Ascending aorta (tissue), 2 donors: ENCODE measurements at regions of chr17 and their contacts with region 1.

Region 1: GRCh38 chr17:48024937-48025906 is 12.4 kb downstream of the COPZ2 start:
- DNase-seq: peak; percentile 93 to 99
- H3K4me3 ChIP-seq: peak overlapping the region; percentile 61 to 63
- H3K27ac ChIP-seq: peak overlapping the region; percentile 77 to 86
- H3K4me1 ChIP-seq: peaks cover 17 to 31% of the 10 kb centered on the region in 2 donors
- H3K27me3 ChIP-seq: no peaks in the 10 kb centered on the region
- CTCF ChIP-seq: peak; percentile 91 to 93 (median 92)

Region 2: DNA sequence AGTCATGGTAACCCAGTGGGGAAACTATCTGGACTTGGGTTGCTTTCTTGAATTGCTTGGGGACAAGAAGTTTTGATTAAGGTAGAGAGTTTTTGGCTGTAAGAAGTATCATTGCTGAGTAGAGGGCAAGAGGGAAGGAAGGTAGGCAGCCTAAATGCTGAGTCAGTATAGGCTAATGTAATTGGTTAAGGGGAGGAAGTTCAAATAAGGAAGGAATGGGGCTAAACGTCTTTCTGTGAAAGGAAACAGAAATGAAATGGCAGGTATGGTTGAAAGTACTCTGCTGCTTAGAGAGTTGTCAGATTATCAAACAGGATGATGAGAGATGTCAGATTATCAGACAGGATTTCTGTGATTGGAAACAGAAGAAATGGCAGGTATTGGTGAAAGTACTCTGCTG is 355.1 kb before region 1 on chr17:
- intact Hi-C with region 1: no loop called
- DNase-seq: no peak
- H3K4me3 ChIP-seq: no peak overlapping the region
- H3K27ac ChIP-seq: no peak overlapping the region
- H3K4me1 ChIP-seq: no peaks in the 10 kb centered on the region
- H3K27me3 ChIP-seq: no peaks in the 10 kb centered on the region
- CTCF ChIP-seq: no peak

Region 3: DNA sequence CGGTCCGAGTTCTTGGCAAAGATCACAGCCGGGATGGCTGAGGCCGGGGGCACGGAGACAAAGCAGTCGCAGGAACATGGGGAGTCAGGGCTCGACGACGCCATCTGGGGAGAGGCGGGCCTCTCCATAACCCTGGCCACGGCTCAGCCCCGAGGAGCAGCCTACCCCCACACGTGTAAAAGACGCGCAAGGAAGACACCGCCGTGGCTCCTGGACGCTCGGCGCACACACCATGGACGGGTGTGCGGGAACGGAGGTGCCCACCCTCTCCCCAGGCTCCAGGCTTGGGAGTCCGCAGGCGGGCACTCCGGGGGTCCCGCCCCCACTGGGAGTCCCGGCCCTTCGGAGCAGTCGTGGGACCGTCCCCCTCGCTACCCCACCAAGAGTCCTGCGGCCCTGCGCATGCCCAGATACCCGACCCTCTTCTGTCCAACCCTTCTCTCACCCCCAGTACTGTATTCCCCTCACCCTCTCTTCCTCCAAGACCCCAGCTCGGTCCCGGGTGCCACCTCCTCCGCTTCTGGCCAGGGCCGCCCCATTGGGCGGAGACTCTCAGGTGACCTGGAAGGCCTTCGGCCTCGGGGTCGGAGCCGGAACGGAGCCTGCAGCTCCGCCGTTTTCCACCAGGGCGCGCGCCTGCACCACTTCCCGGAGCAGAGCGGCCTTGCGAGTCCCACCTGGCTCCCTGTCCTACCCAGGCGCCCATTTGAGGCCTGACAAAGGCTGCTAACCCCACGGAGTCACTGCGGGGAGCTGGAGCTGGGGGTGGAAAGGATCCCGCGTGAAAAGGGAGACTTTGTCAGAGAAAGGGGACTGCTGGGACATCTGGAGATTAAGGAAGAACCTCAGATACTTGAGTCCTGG is 184.2 kb before region 1 on chr17 and contains the start of gene SCRN2:
- intact Hi-C with region 1: loop called (anchors 5 kb)
- DNase-seq: peak; percentile 30 to 94
- H3K4me3 ChIP-seq: peak within 1 kb of the TSS; percentile 64 to 83
- H3K27ac ChIP-seq: peak within 1 kb of the TSS; percentile 13 to 35
- H3K4me1 ChIP-seq: peaks cover 5 to 6% of the 10 kb centered on the region in 2 donors
- H3K27me3 ChIP-seq: no peaks in the 10 kb centered on the region
- CTCF ChIP-seq: peak; percentile 98 to 99 (median 98)
- total RNA-seq, gene SCRN2: 126 TPM

Region 4: GRCh38 chr17:47970704-47971463 is 54.3 kb before region 1 on chr17 and contains the start of gene CDK5RAP3:
- intact Hi-C with region 1: loop called (anchors 2 kb)
- DNase-seq: peak; percentile 99 to 100
- H3K4me3 ChIP-seq: peak within 1 kb of the TSS; percentile 82 to 98
- H3K27ac ChIP-seq: peak within 1 kb of the TSS; percentile 86 to 87
- H3K4me1 ChIP-seq: peaks cover 3 to 15% of the 10 kb centered on the region in 2 donors
- H3K27me3 ChIP-seq: no peaks in the 10 kb centered on the region
- CTCF ChIP-seq: peak; percentile 90 to 98 (median 97)
- total RNA-seq, gene CDK5RAP3: 52.3 TPM

Region 5: DNA sequence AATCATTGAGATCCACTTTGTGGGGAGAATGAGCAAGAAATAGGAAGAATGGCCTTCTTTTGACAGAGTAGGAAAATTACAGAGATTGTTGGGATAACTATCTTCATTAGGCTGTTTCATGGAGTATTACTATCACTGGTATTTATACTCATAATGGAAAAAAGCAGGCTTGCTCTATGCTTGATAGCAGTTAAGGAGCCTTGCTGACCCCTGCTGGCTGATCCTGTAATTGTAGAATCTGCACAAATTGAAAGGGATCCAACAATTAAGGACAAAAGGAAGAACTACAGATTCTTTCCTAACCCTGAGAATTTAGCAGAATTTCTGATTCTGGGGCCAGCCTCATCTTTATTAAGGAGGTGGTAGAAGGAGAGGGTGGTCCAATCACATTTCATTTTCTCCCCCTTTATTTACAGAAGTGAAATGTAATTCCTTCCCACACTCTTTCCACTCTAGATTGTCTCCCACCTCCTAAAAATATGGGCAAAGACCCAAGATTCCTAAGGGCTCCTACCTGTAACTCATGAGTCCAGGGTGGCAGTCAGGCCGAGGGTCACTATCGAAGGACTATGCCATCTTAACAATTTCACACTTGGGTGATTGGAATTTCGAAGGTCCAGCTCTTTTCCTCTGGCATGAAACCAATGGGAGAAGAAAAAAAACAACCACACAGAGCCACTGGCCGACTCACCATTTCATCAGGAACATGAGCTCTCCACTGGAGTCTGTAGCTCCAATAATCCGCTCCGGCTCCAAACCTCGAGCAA is 49.3 kb after region 1 on chr17:
- intact Hi-C with region 1: loop called (anchors 1 kb)
- DNase-seq: peak in 1 of 2 donors; percentile 92
- H3K4me3 ChIP-seq: no peak overlapping the region
- H3K27ac ChIP-seq: peak overlapping the region in 1 of 2 donors; percentile 34
- H3K4me1 ChIP-seq: no peaks in the 10 kb centered on the region
- H3K27me3 ChIP-seq: no peaks in the 10 kb centered on the region
- CTCF ChIP-seq: peak; percentile 67 to 83 (median 82)

Region 6: DNA sequence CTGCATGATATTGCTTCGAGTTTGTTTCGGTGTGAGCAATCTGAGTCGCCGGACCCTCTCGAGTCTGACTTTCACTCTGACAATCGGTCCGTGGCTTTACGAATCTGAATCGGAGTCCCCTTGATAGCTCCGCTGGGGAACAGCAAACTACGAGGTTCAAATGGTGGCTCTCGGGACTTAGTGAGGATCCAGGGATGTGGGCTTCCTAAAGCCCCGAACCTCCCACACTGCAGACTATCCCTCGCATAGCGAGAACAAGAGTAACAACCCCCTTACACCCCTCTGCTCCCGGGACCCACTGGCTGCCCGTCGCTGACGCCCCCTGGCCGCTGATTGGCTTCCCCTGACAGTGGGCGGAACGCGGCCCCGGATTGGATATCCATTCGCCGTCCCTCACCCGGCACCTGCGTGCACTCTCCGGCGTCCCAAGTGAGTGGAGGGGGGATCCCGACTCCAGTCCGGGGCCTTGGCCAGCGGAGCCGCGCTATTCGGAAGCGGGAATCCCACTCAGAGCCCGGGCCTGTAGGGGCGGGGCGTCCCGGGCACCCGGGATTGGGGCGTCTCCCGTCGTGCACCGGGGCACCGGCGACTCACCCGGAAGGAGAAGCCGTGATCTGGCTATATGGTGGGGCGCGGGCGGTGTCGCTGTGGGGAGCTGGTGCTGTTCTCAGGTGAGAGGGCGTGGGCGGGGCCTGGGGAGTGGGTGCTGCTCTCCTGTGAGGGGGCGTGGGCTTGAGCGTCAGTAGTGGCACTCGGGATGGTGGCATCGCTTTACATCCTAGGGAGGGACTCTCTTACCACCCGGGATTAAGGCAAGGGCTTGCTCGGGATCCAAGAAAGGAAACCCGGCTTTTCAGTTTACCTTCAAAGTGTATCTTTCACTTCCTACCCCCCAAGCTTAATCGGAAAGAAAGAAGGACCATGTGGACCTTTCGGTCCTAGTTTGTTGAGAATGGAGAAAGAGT is 82.2 kb after region 1 on chr17 and contains the start of gene SNX11:
- intact Hi-C with region 1: loop called (anchors 1 kb)
- DNase-seq: peak; percentile 79 to 94
- H3K4me3 ChIP-seq: peak within 1 kb of the TSS; percentile 65 to 84
- H3K27ac ChIP-seq: peak within 1 kb of the TSS; percentile 92 to 95
- H3K4me1 ChIP-seq: peaks cover 5 to 10% of the 10 kb centered on the region in 2 donors
- H3K27me3 ChIP-seq: no peaks in the 10 kb centered on the region
- CTCF ChIP-seq: no peak
- total RNA-seq, gene SNX11: 6.6 TPM

Region 7: DNA sequence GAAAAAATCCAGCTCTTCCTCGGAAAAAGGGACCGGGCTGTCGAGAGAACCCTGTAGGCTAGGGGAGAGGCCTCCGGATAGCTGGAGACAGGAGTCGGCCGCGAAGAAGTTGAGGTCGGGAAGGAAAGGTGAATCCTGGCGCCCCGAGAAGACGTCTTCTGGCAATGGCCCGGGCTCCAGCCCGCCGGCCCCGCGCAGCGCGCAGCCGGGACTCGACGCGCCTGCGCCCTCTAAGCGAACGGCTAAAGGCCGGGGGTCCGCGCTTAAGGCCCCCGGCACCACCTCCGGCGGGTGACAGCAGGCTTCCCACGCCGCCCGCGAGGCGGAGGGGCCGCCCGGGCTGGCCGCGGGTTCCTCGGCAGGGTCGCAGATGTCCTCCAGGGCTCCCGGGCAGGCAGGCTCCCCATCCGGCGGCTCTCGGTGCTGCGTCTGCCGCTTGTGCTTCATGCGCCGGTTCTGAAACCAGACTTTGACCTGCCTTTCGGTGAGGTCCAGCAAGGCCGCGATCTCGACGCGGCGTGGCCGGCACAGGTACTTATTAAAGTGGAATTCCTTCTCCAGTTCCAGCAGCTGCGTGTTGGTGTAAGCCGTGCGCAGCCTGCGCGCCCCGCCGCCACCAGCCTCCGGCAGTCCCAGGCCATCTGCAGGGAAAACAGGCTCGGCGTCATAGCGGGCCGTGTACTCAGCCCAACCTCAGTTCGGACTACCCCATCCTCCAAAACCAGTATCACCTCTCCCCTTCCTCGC is 518.1 kb after region 1 on chr17:
- intact Hi-C with region 1: loop called (anchors 5 kb)
- DNase-seq: no peak
- H3K4me3 ChIP-seq: peak overlapping the region; percentile 76 to 83
- H3K27ac ChIP-seq: peak overlapping the region; percentile 93 to 97
- H3K4me1 ChIP-seq: peaks cover 6 to 38% of the 10 kb centered on the region in 2 donors
- H3K27me3 ChIP-seq: no peaks in the 10 kb centered on the region
- CTCF ChIP-seq: peak; percentile 10 to 23 (median 12)